Caco-2 (cell line): ENCODE measurements at regions of chr17 and their contacts with region 1.

Region 1: GRCh38 chr17:44533533-44534246 is 23.6 kb upstream of the FZD2 start:
- DNase-seq: peak; percentile 92 to 94
- H3K4me3 ChIP-seq: no peak overlapping the region
- H3K4me3 Mint-ChIP-seq: no peak overlapping the region
- H3K27ac Mint-ChIP-seq: peak overlapping the region; percentile 68
- H3K4me1 ChIP-seq: peaks cover 41% of the 10 kb centered on the region
- H3K4me1 Mint-ChIP-seq: peaks cover 22% of the 10 kb centered on the region
- H3K27me3 ChIP-seq: no peaks in the 10 kb centered on the region; the same call in 1 of the 2 replicates
- H3K27me3 Mint-ChIP-seq: no peaks in the 10 kb centered on the region
- CTCF ChIP-seq: peak; percentile 95

Region 2: GRCh38 chr17:44503147-44504029 is 30.3 kb before region 1 on chr17 and contains the start of gene GPATCH8:
- CTCF ChIA-PET with region 1: no interaction called
- POLR2A ChIA-PET with region 1: no interaction called
- intact Hi-C with region 1: no loop called
- DNase-seq: peak; percentile 98 to 99
- H3K4me3 ChIP-seq: peak within 1 kb of the TSS; percentile 98
- H3K4me3 Mint-ChIP-seq: peak within 1 kb of the TSS; percentile 97
- H3K27ac Mint-ChIP-seq: peak within 1 kb of the TSS; percentile 98
- H3K4me1 ChIP-seq: peaks cover 14% of the 10 kb centered on the region
- H3K4me1 Mint-ChIP-seq: peaks cover 5% of the 10 kb centered on the region
- H3K27me3 ChIP-seq: no peaks in the 10 kb centered on the region
- H3K27me3 Mint-ChIP-seq: no peaks in the 10 kb centered on the region
- CTCF ChIP-seq: no peak
- total RNA-seq, gene GPATCH8: 53.4 and 55.5 TPM in 2 replicates

Region 3: GRCh38 chr17:44556832-44557606 is 23.3 kb after region 1 on chr17 and contains the start of gene FZD2:
- CTCF ChIA-PET with region 1: interaction called, 11 read pairs
- POLR2A ChIA-PET with region 1: interaction called, 3 read pairs
- intact Hi-C with region 1: loop called (anchors 2 kb)
- DNase-seq: peak; percentile 89 to 93
- H3K4me3 ChIP-seq: peak within 1 kb of the TSS; percentile 61
- H3K4me3 Mint-ChIP-seq: peak within 1 kb of the TSS; percentile 93
- H3K27ac Mint-ChIP-seq: peak within 1 kb of the TSS; percentile 97
- H3K4me1 ChIP-seq: peaks cover 52% of the 10 kb centered on the region
- H3K4me1 Mint-ChIP-seq: peaks cover 33% of the 10 kb centered on the region
- H3K27me3 ChIP-seq: no peaks in the 10 kb centered on the region
- H3K27me3 Mint-ChIP-seq: no peaks in the 10 kb centered on the region
- CTCF ChIP-seq: no peak
- total RNA-seq, gene FZD2: 36.4 and 39.5 TPM in 2 replicates

Region 4: GRCh38 chr17:44587339-44587738 is 53.6 kb after region 1 on chr17:
- CTCF ChIA-PET with region 1: interaction called, 7 read pairs
- POLR2A ChIA-PET with region 1: no interaction called
- intact Hi-C with region 1: loop called (anchors 1 kb)
- DNase-seq: peak; percentile 82 to 88
- H3K4me3 ChIP-seq: no peak overlapping the region
- H3K4me3 Mint-ChIP-seq: peak overlapping the region; percentile 43
- H3K27ac Mint-ChIP-seq: peak overlapping the region; percentile 84
- H3K4me1 ChIP-seq: peaks cover 33% of the 10 kb centered on the region
- H3K4me1 Mint-ChIP-seq: peaks cover 33% of the 10 kb centered on the region
- H3K27me3 ChIP-seq: no peaks in the 10 kb centered on the region
- H3K27me3 Mint-ChIP-seq: no peaks in the 10 kb centered on the region
- CTCF ChIP-seq: no peak

Region 5: GRCh38 chr17:44607836-44608690 is 74.4 kb after region 1 on chr17:
- CTCF ChIA-PET with region 1: interaction called, 3 read pairs
- POLR2A ChIA-PET with region 1: interaction called, 11 read pairs
- intact Hi-C with region 1: no loop called
- DNase-seq: peak; percentile 76 to 77
- H3K4me3 ChIP-seq: no peak overlapping the region
- H3K4me3 Mint-ChIP-seq: no peak overlapping the region
- H3K27ac Mint-ChIP-seq: peak overlapping the region; percentile 88
- H3K4me1 ChIP-seq: peaks cover 38% of the 10 kb centered on the region
- H3K4me1 Mint-ChIP-seq: peaks cover 34% of the 10 kb centered on the region
- H3K27me3 ChIP-seq: no peaks in the 10 kb centered on the region
- H3K27me3 Mint-ChIP-seq: no peaks in the 10 kb centered on the region
- CTCF ChIP-seq: no peak

Region 6: DNA sequence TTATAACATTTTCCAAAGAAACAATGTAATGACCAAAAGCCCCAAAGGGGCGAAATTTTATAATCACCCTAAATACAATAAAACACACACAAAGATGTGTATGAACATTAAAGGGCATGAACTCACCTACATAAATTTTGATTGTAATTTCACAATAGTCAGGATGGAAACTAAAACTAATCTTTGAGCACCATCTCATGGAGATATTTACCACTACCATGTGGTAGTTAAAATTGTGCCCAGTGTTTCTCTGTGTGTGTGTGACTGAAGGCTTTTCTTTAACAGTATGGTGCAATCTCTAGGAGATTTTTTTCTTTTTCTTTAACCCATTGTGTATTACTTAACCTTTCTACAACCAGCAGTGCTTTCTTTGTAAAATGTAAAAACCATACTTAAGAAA is 102.9 kb after region 1 on chr17:
- CTCF ChIA-PET with region 1: interaction called, 8 read pairs
- POLR2A ChIA-PET with region 1: no interaction called
- intact Hi-C with region 1: loop called (anchors 1 kb)
- DNase-seq: peak in 1 of 2 experiments; percentile 53
- H3K4me3 ChIP-seq: no peak overlapping the region
- H3K4me3 Mint-ChIP-seq: no peak overlapping the region
- H3K27ac Mint-ChIP-seq: no peak overlapping the region
- H3K4me1 ChIP-seq: no peaks in the 10 kb centered on the region
- H3K4me1 Mint-ChIP-seq: no peaks in the 10 kb centered on the region
- H3K27me3 ChIP-seq: no peaks in the 10 kb centered on the region
- H3K27me3 Mint-ChIP-seq: no peaks in the 10 kb centered on the region
- CTCF ChIP-seq: peak; percentile 42 to 51

Region 7: GRCh38 chr17:44672479-44673093 is 138.9 kb after region 1 on chr17:
- CTCF ChIA-PET with region 1: interaction called, 6 read pairs
- POLR2A ChIA-PET with region 1: no interaction called
- intact Hi-C with region 1: loop called (anchors 1 kb)
- DNase-seq: no peak
- H3K4me3 ChIP-seq: no peak overlapping the region
- H3K4me3 Mint-ChIP-seq: no peak overlapping the region
- H3K27ac Mint-ChIP-seq: no peak overlapping the region
- H3K4me1 ChIP-seq: no peaks in the 10 kb centered on the region
- H3K4me1 Mint-ChIP-seq: no peaks in the 10 kb centered on the region
- H3K27me3 ChIP-seq: no peaks in the 10 kb centered on the region
- H3K27me3 Mint-ChIP-seq: no peaks in the 10 kb centered on the region
- CTCF ChIP-seq: peak; percentile 49 to 64

Region 8: GRCh38 chr17:44864866-44865660 is 331.4 kb after region 1 on chr17:
- CTCF ChIA-PET with region 1: no interaction called
- POLR2A ChIA-PET with region 1: no interaction called
- intact Hi-C with region 1: loop called (anchors 5 kb)
- DNase-seq: peak; percentile 72 to 81
- H3K4me3 ChIP-seq: no peak overlapping the region
- H3K4me3 Mint-ChIP-seq: no peak overlapping the region
- H3K27ac Mint-ChIP-seq: no peak overlapping the region
- H3K4me1 ChIP-seq: no peaks in the 10 kb centered on the region
- H3K4me1 Mint-ChIP-seq: no peaks in the 10 kb centered on the region
- H3K27me3 ChIP-seq: no peaks in the 10 kb centered on the region
- H3K27me3 Mint-ChIP-seq: no peaks in the 10 kb centered on the region
- CTCF ChIP-seq: peak; percentile 82 to 86